Activated CD4-positive, alpha-beta memory T cell treated with anti-CD3 and anti-CD28 coated beads, Interleukin-2, amount 10 ng/mL, durations not matched to agents 7 days and 5 days (primary cell): ENCODE measurements at regions of chr17 and their contacts with region 1.

Region 1: DNA sequence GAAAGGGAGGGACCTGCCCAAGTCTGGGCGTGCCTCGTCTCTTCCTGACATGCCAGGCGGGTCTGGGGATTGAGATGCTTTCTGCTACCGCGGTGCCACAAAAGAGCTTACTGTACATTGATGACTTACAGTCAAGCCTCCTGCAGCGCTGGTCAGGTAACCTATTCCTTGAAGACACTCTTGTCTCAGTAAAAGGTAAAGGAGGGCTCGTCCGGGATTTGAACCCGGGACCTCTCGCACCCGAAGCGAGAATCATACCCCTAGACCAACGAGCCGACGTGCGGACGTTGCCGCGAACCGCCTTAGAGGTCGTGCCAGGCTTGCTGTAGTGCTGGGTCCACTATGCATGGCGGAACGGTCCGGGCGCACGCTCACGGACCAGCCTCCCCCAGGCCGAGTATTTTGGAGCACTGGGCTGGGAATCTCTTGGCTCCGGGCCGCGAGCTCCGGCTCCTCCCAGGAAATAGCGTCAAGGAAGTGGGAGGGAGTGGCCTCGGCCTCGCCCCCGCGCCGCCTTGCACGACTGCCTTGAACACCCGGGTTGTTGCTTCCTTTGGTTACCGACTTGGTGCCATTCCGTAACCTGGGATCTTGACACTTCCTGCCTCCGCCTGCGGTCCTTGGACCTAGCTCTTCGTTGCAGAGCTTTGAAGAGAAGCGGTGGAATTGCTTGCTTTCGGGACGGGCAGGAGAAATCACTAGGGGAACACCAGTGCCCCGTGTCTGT is 12.4 kb upstream of the AURKB start:
- DNase-seq: peak; percentile 90
- H3K4me3 Mint-ChIP-seq: peak overlapping the region; percentile 95
- H3K27ac Mint-ChIP-seq: peak overlapping the region; percentile 99
- H3K4me1 Mint-ChIP-seq: peaks cover 69% of the 10 kb centered on the region
- H3K27me3 Mint-ChIP-seq: peaks cover 2% of the 10 kb centered on the region

Region 2: DNA sequence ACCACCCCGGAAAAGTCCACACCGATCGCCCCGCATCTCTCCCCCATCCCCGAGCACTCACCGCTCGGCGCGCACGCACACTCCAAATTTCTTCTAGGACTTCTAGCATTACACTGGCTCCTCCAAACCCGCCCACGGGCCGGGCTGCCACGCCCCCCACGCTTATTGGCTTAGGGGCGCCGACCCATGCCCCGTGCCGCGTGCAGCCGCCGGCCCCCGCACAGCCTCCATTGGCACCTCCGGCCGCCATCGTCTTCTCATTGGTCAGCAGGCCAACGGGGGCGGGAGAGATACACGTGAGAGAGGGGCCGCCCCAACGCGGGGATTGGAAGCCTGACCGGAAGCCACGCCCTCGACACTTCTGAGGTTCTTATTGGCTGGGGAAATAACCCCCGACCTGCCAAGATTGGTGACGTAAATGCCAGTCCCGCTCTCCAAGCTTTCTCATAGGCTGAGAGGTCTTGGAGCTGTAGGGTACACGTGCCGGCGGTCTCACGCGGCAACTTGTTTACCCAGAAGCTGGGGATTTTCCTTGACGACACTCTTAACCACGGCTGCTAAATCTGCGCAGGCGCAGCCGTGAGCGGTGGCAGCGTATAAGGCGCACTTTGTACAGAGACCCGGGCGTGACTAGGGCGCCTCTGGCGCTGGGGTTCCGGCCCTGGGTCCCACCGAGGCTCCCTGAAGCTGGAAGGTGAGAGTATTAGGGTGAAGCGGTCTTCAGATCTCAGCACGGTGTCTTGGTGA is 66.4 kb before region 1 on chr17:
- CTCF ChIA-PET with region 1: interaction called, 6 read pairs
- POLR2A ChIA-PET with region 1: interaction called, 46 read pairs
- DNase-seq: peak; percentile 100
- H3K4me3 Mint-ChIP-seq: no peak overlapping the region
- H3K27ac Mint-ChIP-seq: no peak overlapping the region
- H3K4me1 Mint-ChIP-seq: peaks cover 51% of the 10 kb centered on the region
- H3K27me3 Mint-ChIP-seq: no peaks in the 10 kb centered on the region

Region 3: DNA sequence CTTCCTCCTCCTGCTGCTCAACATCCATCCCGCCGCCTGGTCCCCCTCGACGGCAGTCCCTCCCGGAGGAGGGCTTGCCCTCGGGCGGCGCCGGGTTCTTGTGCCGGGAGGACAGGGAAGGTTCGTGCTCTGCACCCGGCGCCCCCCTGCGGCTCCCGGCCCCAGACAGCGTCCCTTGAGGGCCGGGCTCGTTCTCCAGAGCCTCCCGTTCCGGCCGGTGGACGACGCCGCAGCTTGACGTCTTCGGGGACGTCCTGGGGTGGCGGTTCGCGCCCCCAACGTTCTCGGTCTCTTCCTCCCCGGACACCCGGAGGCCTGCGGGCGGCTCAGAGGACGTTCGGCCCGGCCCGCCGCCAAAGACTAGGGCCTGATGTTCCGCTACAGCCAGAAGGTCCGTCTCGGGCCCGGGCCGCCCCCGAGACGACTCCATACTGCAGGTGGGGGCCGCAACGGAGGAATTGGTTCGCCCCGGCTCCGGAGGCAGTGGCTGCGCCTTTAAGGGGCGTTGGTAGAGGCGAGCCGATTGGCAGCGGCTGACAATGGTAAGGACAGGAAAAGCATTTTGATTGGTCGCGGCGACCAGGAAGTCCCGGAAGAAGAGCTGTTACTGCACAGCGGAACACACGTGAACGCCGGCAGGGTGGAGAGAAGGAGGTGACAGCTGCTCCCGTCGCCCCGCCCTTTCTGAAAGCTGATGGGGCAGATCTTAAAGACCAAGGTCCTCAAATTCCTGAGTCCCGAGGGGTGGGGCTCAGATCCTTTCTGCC is 32.9 kb before region 1 on chr17 and contains the start of gene BORCS6:
- CTCF ChIA-PET with region 1: interaction called, 52 read pairs
- POLR2A ChIA-PET with region 1: interaction called, 612 read pairs
- DNase-seq: peak; percentile 97
- H3K4me3 Mint-ChIP-seq: no peak within 1 kb of the TSS
- H3K27ac Mint-ChIP-seq: no peak within 1 kb of the TSS
- H3K4me1 Mint-ChIP-seq: peaks cover 13% of the 10 kb centered on the region
- H3K27me3 Mint-ChIP-seq: no peaks in the 10 kb centered on the region
- total RNA-seq, gene BORCS6: 16.3 to 17.0 TPM

Region 4: GRCh38 chr17:8209909-8210760 is 12.7 kb before region 1 on chr17 and contains the start of gene AURKB:
- CTCF ChIA-PET with region 1: interaction called, 14 read pairs
- POLR2A ChIA-PET with region 1: interaction called, 237 read pairs
- DNase-seq: peak; percentile 94
- H3K4me3 Mint-ChIP-seq: peak within 1 kb of the TSS; percentile 87
- H3K27ac Mint-ChIP-seq: peak within 1 kb of the TSS; percentile 86
- H3K4me1 Mint-ChIP-seq: peaks cover 39% of the 10 kb centered on the region
- H3K27me3 Mint-ChIP-seq: no peaks in the 10 kb centered on the region
- total RNA-seq, gene AURKB: 160 to 167 TPM

Region 5: GRCh38 chr17:8248751-8249607 is 26.2 kb after region 1 on chr17 and contains the start of gene PFAS:
- CTCF ChIA-PET with region 1: interaction called, 40 read pairs
- POLR2A ChIA-PET with region 1: interaction called, 371 read pairs
- DNase-seq: peak; percentile 96
- H3K4me3 Mint-ChIP-seq: peak within 1 kb of the TSS; percentile 94
- H3K27ac Mint-ChIP-seq: peak within 1 kb of the TSS; percentile 100
- H3K4me1 Mint-ChIP-seq: peaks cover 50% of the 10 kb centered on the region
- H3K27me3 Mint-ChIP-seq: no peaks in the 10 kb centered on the region
- total RNA-seq, gene PFAS: 43.6 to 45.9 TPM

Region 6: GRCh38 chr17:8275421-8276290 is 52.9 kb after region 1 on chr17:
- CTCF ChIA-PET with region 1: no interaction called
- POLR2A ChIA-PET with region 1: no interaction called
- DNase-seq: no peak
- H3K4me3 Mint-ChIP-seq: no peak overlapping the region
- H3K27ac Mint-ChIP-seq: no peak overlapping the region
- H3K4me1 Mint-ChIP-seq: no peaks in the 10 kb centered on the region
- H3K27me3 Mint-ChIP-seq: no peaks in the 10 kb centered on the region

Region 7: DNA sequence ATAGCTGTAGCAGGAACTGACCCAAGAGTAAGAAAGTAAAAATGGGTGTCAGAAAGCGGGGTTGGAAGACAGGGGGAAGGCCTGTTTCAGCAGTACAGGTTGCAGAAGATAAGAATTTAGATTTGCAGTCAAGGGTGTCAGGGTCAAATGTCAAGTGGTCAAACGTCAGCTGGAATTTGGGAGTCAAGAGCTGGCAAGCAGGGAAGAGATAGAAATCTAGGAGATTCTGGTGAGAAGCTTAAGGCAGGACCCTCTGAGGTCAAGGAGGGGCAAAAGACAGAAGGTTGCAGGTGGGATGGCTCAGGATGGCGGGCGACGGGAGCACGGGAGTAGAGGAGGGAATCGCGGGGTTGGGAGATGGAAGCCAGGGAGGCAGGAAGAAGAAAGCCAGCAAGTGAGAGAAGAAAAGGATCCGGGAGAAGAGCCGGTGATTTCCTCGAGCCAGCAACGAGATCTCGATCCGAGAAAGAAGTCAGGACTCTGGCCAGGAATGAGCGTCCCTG is 72.1 kb after region 1 on chr17:
- CTCF ChIA-PET with region 1: interaction called, 15 read pairs
- POLR2A ChIA-PET with region 1: interaction called, 41 read pairs
- DNase-seq: no peak
- H3K4me3 Mint-ChIP-seq: peak overlapping the region; percentile 89
- H3K27ac Mint-ChIP-seq: peak overlapping the region; percentile 83
- H3K4me1 Mint-ChIP-seq: peaks cover 53% of the 10 kb centered on the region
- H3K27me3 Mint-ChIP-seq: no peaks in the 10 kb centered on the region